H1 (cell line): ENCODE measurements at regions of chr17 and their contacts with region 1.

Region 1: GRCh38 chr17:50478391-50479381 is at the start of gene RSAD1:
- DNase-seq: peak; percentile 68 to 84
- H3K4me3 ChIP-seq: peak within 1 kb of the TSS; percentile 46 to 81 (median 72)
- H3K27ac ChIP-seq: no peak within 1 kb of the TSS; the same call in 1 of the 2 replicates
- H3K4me1 ChIP-seq: peaks cover 0 to 10% (median 6%) of the 10 kb centered on the region in 4 experiments; a peak in 6 of 7 replicates
- H3K27me3 ChIP-seq: peaks cover 0 to 4% (median under 1%) of the 10 kb centered on the region in 4 experiments; a peak in 2 of 7 replicates
- CTCF ChIP-seq: peak; percentile 66 to 91 (median 67)
- EP300 ChIP-seq: no peak; a peak in 1 of 3 replicates
- POLR2A ChIP-seq: peak in 1 of 2 experiments; percentile 87; a peak in 2 of 3 replicates
- RAD21 ChIP-seq: peak; percentile 40 to 58; a peak in 3 of 4 replicates
- total RNA-seq, gene RSAD1: 31.3 and 33.5 TPM in 2 replicates

Region 2: GRCh38 chr17:50468409-50469207 is 10.1 kb before region 1 on chr17 and contains the start of gene CHAD:
- CTCF ChIA-PET with region 1: interaction called, 11 read pairs
- POLR2A ChIA-PET with region 1: interaction called, 10 read pairs
- DNase-seq: peak in 1 of 2 experiments; percentile 58
- H3K4me3 ChIP-seq: peak within 1 kb of the TSS; percentile 27 to 62 (median 35)
- H3K27ac ChIP-seq: no peak within 1 kb of the TSS
- H3K4me1 ChIP-seq: peaks cover 0 to 17% (median 7%) of the 10 kb centered on the region in 4 experiments; a peak in 6 of 7 replicates
- H3K27me3 ChIP-seq: peaks cover 8 to 39% (median 27%) of the 10 kb centered on the region in 4 experiments; a peak in 6 of 7 replicates
- CTCF ChIP-seq: no peak
- EP300 ChIP-seq: no peak
- POLR2A ChIP-seq: no peak
- RAD21 ChIP-seq: no peak
- total RNA-seq, gene CHAD: 0.17 TPM in 1 of 2 replicates, not detected in the other

Region 3: DNA sequence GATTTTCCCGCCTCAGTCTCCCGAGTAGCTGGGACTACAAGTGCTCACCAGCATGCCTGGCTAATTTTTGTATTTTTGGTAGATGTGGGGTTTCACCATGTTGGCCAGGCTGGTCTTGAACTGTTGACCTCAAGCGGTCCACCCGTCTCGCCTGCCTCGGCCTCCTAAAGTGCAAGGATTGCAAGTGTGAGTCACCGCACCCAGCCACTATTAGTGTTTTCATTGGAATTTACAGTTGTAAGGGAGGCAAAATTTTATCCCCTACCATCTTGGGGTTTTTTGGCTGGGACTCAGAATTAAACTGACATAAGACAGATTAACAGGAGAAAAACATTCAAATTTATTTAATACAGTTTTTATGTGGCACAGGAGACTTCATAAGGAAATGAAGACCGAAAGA is 17.2 kb after region 1 on chr17:
- CTCF ChIA-PET with region 1: interaction called, 116 read pairs
- POLR2A ChIA-PET with region 1: no interaction called
- DNase-seq: no peak
- H3K4me3 ChIP-seq: no peak overlapping the region
- H3K27ac ChIP-seq: no peak overlapping the region
- H3K4me1 ChIP-seq: no peaks in the 10 kb centered on the region
- H3K27me3 ChIP-seq: no peaks in the 10 kb centered on the region
- CTCF ChIP-seq: no peak
- EP300 ChIP-seq: no peak
- POLR2A ChIP-seq: no peak
- RAD21 ChIP-seq: no peak

Region 4: DNA sequence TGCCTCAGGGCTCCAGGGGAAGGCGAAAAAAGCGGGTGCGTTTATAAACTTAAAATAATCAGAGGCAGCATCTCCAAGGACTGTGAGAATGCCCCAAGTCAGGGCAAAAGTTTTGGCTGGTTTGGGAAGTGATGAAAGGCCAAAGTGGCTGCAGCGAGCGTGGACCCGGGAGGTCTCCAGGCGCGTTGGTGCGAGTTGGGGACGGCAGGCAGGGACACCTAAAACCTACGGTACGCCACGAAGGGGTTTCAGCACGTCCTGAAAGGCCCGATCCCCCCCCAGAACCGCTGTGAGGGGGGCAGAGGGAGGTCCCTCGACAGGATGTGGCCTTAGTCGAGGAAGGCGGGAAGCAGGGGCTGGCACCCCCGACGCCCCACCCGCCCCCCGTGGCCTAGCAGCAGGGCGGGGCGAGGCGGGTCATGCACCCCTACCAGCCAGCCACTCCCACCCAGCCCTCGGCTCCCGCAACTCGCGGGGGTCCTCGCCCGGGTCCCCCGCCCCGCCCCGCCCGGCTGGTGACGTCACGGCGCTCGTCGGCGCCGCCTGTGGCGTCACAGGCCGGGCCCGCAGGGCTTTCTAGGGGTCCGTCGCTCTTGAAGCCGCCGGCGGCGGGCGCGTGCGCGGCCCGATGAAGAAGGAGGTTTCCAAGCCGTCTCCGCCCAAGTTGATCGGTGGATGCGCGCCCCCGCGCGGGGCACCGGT is 29.3 kb after region 1 on chr17 and contains the start of gene MYCBPAP:
- CTCF ChIA-PET with region 1: interaction called, 116 read pairs
- POLR2A ChIA-PET with region 1: interaction called, 4 read pairs
- DNase-seq: peak; percentile 43 to 87
- H3K4me3 ChIP-seq: peak within 1 kb of the TSS; percentile 69 to 86 (median 75)
- H3K27ac ChIP-seq: no peak within 1 kb of the TSS
- H3K4me1 ChIP-seq: peaks cover 5 to 15% (median 10%) of the 10 kb centered on the region in 4 experiments
- H3K27me3 ChIP-seq: no peaks in the 10 kb centered on the region; a peak in 1 of 7 replicates
- CTCF ChIP-seq: no peak; a peak in 1 of 4 replicates
- EP300 ChIP-seq: no peak
- POLR2A ChIP-seq: peak in 1 of 2 experiments; percentile 53; a peak in 2 of 3 replicates
- RAD21 ChIP-seq: 0 out of 4 replicates have a peak, but pooled peaks of 1 of the 2 experiments have one; percentile 9
- total RNA-seq, gene MYCBPAP: 1.7 and 3.3 TPM in 2 replicates

Region 5: DNA sequence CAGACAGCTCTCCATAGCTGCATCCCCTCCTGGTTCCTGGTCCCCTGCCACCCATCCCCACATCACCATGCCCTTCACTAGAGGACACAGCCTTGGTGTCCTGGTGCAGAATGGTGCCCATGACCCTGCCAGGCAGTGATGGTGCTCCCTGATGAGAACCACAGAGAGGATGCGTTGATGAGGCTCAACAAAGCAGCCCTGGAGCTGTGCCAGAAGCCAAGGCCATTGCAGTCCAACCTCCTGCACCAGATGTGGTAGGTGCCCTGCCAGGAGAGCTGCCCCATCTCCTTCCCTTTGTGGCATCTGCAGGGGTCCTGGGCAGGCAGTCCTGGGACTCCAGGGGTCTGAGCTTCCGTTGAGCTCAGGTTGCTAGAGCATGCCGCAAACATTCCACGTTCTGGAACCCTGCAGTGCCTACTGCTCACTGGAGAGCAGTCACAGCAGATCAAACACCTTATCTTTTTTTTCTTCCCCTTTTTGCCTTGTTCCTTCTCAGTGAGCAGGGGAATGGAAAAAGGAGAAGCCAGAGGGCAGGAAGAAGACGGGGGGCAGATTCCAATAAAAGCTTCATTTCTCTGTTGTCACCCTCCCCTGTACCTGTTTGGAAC is 48.6 kb after region 1 on chr17:
- CTCF ChIA-PET with region 1: interaction called, 36 read pairs
- POLR2A ChIA-PET with region 1: interaction called, 3 read pairs
- DNase-seq: no peak
- H3K4me3 ChIP-seq: no peak overlapping the region
- H3K27ac ChIP-seq: no peak overlapping the region
- H3K4me1 ChIP-seq: peaks cover 3 to 10% (median 6%) of the 10 kb centered on the region in 4 experiments; a peak in 6 of 7 replicates
- H3K27me3 ChIP-seq: peaks cover 0 to 5% (median 0%) of the 10 kb centered on the region in 4 experiments; a peak in 2 of 7 replicates
- CTCF ChIP-seq: no peak
- EP300 ChIP-seq: no peak
- POLR2A ChIP-seq: no peak
- RAD21 ChIP-seq: no peak

Region 6: DNA sequence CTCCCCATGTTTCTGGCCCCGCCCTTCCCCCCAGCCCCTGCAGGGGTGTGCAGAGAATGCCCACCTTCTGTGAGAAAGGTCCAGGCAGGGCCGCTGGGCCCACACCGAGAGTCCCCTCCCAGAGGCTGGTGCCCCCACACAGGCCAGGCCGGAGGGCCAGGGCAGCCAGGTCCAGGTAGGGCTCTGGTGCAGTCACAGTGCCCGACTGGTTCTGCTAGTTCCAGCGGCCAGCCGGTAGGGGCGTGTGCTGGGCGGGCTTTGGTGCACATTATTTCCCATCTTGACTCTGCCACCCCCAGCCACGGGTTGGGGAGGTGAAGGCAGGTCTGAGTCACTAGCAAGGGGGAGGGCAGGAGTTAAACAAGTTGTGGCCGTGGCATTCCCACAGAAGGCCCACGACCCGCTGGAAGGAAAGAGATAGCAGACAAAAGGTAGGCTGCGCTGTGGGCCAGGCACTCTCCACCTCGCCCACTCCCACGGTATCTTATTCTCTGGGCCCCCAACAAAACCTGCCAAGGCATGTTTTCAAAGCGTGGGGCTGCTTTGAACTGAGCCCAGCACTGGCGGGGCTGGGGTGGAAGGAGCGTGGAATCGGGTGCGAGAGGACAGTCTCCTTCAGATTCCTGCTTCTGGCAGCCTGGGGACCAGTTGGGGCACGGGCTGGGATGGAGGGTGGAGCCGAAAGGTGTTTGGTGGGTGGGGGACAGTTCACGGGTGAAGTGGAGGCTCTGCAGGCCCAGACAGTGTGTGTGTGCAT is 55.7 kb after region 1 on chr17:
- CTCF ChIA-PET with region 1: interaction called, 42 read pairs
- POLR2A ChIA-PET with region 1: interaction called, 4 read pairs
- DNase-seq: peak in 1 of 2 experiments; percentile 74
- H3K4me3 ChIP-seq: peak overlapping the region; percentile 36 to 77 (median 74)
- H3K27ac ChIP-seq: no peak overlapping the region
- H3K4me1 ChIP-seq: peaks cover 5 to 29% (median 18%) of the 10 kb centered on the region in 4 experiments
- H3K27me3 ChIP-seq: peaks cover 0 to 21% (median 10%) of the 10 kb centered on the region in 4 experiments; a peak in 4 of 7 replicates
- CTCF ChIP-seq: peak; percentile 61 to 84 (median 76)
- EP300 ChIP-seq: no peak
- POLR2A ChIP-seq: no peak
- RAD21 ChIP-seq: peak; percentile 10 to 25; a peak in 1 of 4 replicates

Region 7: DNA sequence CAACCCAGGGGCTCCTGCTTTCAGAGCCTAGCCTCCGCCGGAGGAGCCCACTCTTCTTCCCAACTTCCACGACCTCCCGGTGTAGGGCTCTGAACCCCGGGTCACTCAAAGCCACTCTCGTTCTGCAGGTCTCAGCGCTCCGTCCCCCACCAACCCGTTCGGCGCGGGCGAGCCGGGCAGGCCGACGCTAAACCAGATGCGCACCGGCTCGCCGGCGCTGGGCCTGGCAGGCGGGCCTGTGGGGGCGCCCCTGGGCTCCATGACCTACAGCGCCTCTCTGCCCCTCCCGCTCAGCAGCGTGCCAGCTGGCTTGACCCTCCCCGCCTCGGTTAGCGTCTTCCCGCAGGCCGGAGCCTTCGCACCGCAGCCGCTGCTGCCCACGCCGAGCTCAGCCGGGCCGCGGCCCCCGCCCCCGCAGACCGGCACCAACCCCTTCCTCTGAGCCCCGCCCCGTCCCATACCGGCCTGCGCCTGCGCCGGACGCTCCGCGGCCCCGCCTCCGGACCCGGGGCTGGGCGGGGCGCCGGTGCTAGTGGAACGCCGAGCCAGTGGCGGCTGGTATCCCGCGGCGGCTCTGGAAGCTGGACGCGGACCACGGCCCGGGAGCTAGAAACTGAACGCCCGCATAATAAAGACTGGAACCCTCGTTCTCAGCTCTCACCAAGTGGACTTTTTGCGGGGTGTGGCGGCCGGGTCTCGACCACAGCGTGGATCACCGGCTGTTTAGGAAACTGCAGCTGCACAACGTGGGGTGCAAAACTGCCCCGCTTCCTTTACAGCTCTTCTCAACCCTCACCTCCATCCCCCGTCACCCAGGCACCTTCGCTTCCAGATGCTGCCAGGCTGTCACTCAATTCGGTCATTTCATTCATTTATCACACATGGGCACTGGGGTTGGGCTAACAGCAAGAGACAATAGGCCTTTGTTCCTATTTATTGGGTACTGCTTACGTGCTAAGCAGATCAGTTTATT is 63.3 kb after region 1 on chr17:
- CTCF ChIA-PET with region 1: interaction called, 42 read pairs
- POLR2A ChIA-PET with region 1: interaction called, 3 read pairs
- DNase-seq: peak in 1 of 2 experiments; percentile 92
- H3K4me3 ChIP-seq: peak overlapping the region; percentile 47 to 76 (median 73)
- H3K27ac ChIP-seq: no peak overlapping the region
- H3K4me1 ChIP-seq: peaks cover 2 to 19% (median 10%) of the 10 kb centered on the region in 4 experiments
- H3K27me3 ChIP-seq: peaks cover 0 to 6% (median 5%) of the 10 kb centered on the region in 4 experiments; a peak in 4 of 7 replicates
- CTCF ChIP-seq: peak in 1 of 3 experiments; percentile 11; a peak in 1 of 4 replicates
- EP300 ChIP-seq: no peak; a peak in 1 of 3 replicates
- POLR2A ChIP-seq: no peak
- RAD21 ChIP-seq: no peak; a peak in 1 of 4 replicates

Region 8: GRCh38 chr17:50719144-50719923 is 240.6 kb after region 1 on chr17 and contains the start of gene LUC7L3:
- CTCF ChIA-PET with region 1: no interaction called
- POLR2A ChIA-PET with region 1: no interaction called
- DNase-seq: peak; percentile 73 to 97
- H3K4me3 ChIP-seq: peak within 1 kb of the TSS; percentile 60 to 95 (median 94)
- H3K27ac ChIP-seq: peak within 1 kb of the TSS; percentile 99
- H3K4me1 ChIP-seq: peaks cover 0 to 8% (median 2%) of the 10 kb centered on the region in 4 experiments; a peak in 3 of 7 replicates
- H3K27me3 ChIP-seq: no peaks in the 10 kb centered on the region
- CTCF ChIP-seq: peak in 1 of 3 experiments; percentile 14; a peak in 1 of 4 replicates
- EP300 ChIP-seq: 0 out of 3 replicates have a peak, but pooled peaks of 1 of the 2 experiments have one; percentile 40
- POLR2A ChIP-seq: peak; percentile 94 to 98
- RAD21 ChIP-seq: no peak
- total RNA-seq, gene LUC7L3: 126 and 128 TPM in 2 replicates